Sciatic nerve (tissue), 2 donors: ENCODE measurements at regions of chr17 and their contacts with region 1.

Region 1: GRCh38 chr17:13244513-13244912 is 226.7 kb upstream of the ELAC2 start:
- DNase-seq: no peak
- ATAC-seq: peak; percentile 71

Region 2: DNA sequence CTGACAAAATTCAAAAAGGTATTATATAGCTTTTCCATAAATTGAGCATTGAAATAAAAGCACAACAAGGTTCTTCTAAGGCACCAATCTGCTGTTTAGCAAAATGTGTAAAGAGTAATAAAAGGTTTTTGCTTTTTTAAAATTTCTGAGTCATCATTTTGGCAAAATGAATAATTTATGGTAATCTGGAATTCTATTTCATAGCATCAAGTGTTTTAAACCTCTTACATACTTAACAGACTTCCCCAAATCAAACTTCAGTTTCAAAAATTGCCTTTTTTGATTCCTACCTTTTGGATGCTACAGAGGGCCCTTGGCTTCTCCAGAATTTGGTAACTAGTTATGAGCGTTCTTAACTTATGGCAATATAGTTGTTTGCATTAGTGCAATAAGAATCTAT is 72.7 kb before region 1 on chr17:
- intact Hi-C with region 1: loop called (anchors 2 kb)
- DNase-seq: no peak
- ATAC-seq: no peak

Region 3: GRCh38 chr17:13624926-13625325 is 380.4 kb after region 1 on chr17:
- intact Hi-C with region 1: loop called (anchors 5 kb)
- DNase-seq: no peak
- ATAC-seq: no peak

Region 4: GRCh38 chr17:14859542-14859941 is 1615.0 kb after region 1 on chr17:
- intact Hi-C with region 1: no loop called
- DNase-seq: no peak
- ATAC-seq: no peak